Psoas muscle (tissue), 8 donors: ENCODE measurements at regions of chr2 and their contacts with region 1.

Region 1: DNA sequence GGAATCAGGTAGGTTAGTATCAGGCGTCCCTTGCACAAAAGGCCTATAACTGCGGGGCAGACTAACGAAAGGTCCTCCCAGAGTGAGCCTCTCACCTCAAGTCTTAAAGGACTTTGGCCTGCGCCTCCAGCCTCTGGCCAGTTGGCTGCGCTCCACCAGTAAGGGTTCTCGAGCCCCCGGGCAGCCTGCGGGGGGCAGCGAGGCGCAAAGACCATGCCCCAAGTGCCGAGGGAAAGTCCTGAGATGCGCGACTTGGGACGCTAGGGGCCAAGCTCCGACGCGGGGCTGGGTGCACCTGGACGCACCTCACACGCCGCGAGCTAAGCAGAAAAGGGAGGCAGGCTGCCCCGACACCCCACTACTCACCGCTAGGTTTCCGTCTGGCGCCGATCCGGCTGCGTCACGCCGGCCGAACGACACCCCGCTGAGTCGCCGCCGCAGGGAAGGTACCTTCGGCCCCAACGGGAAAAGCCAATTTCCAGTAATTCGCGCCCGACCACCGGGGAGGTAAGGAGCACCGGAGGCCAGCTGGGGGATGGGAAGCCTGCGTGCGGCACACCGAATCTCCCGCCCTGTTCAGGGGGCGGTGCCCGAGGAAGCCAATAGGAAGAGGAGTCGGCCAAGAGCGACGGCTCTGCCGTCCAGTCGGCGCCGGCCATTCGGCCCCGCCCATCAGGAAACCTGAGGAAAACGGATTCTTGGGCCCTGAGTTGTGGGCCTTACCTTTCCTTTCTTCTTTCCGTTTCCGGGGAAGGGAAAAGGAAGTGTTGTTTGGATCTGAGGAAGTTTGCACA is at the start of gene ORC2:
- DNase-seq: peak; percentile 95 to 97
- ATAC-seq: peak; percentile 99 to 100 (median 99)
- H3K4me3 ChIP-seq: peak within 1 kb of the TSS; percentile 94
- H3K27ac ChIP-seq: peak within 1 kb of the TSS; percentile 86
- H3K4me1 ChIP-seq: peaks cover 21% of the 10 kb centered on the region
- H3K27me3 ChIP-seq: no peaks in the 10 kb centered on the region
- CTCF ChIP-seq: peak; percentile 57
- total RNA-seq, gene ORC2: 7.1 to 17.7 (median 12.4) TPM

Region 2: DNA sequence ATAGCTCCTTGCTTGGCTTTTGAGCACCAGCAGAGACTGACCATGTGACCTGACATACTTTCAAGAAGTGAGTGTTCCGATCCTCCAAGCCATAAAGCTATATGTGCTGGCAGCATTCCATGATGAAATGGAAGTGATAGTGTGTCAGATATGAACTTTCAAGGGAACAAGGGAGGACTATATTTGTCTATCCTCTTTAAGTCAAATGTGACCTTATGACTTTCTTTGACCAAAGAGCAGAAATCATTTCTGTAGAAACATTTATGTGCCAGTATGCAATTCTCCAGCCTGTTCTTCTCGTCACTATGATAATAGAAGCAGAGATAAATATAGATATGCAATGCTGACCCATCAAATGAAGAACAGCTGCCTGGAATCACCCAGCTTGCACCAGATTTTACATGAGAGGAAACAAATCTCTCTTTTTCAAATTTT is 93.8 kb after region 1 on chr2:
- intact Hi-C with region 1: no loop called
- DNase-seq: no peak
- ATAC-seq: peak; percentile 57 to 85 (median 72)
- H3K4me3 ChIP-seq: peak overlapping the region; percentile 4
- H3K27ac ChIP-seq: peak overlapping the region; percentile 60
- H3K4me1 ChIP-seq: peaks cover 20% of the 10 kb centered on the region
- H3K27me3 ChIP-seq: no peaks in the 10 kb centered on the region
- CTCF ChIP-seq: no peak

Region 3: DNA sequence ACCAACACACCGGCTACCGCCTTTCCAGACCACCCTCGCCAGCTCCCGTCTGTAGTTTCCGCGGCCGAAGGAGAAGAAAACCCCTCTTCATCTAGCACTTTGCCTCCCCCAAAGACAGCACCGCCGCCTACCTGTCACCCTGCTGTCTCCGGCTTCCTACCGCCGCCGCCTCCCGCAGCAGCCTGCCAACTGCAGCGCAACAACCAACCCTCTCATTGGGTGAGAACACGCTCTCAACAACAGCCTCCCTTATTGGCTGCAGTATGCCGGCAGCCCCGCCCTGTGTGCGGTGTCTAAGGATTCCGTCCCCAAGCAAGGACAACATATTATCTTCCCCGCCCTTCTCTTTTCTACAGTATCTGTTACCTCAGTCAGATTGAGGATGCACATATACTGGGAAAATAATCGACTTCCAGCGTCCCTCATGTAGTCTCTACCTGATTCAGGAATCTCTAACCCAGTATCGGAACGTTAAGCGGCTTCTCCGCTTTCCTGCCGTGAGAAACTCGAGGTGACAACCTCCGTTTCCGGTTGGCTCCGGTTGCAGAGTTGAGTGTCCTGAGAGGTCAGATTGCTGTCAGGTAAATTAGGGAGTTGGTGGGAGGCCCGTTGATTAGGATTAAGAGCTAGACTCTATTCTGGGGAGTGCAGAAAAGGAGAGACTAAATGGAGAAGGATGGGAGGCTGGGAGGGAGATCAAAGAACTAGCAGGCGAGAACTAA is 108.3 kb after region 1 on chr2 and contains the starts of genes HYCC2 and NDUFB3:
- intact Hi-C with region 1: loop called (anchors 1 to 2 kb)
- DNase-seq: peak; percentile 87 to 95
- ATAC-seq: peak; percentile 98 to 100 (median 99)
- H3K4me3 ChIP-seq: peak within 1 kb of the TSS; percentile 92
- H3K27ac ChIP-seq: peak within 1 kb of the TSS; percentile 95
- H3K4me1 ChIP-seq: peaks cover 55% of the 10 kb centered on the region
- H3K27me3 ChIP-seq: no peaks in the 10 kb centered on the region
- CTCF ChIP-seq: peak; percentile 36
- total RNA-seq, gene HYCC2: 7.6 to 8.6 (median 8.1) TPM
- total RNA-seq, gene NDUFB3: 188 to 271 (median 261) TPM

Region 4: DNA sequence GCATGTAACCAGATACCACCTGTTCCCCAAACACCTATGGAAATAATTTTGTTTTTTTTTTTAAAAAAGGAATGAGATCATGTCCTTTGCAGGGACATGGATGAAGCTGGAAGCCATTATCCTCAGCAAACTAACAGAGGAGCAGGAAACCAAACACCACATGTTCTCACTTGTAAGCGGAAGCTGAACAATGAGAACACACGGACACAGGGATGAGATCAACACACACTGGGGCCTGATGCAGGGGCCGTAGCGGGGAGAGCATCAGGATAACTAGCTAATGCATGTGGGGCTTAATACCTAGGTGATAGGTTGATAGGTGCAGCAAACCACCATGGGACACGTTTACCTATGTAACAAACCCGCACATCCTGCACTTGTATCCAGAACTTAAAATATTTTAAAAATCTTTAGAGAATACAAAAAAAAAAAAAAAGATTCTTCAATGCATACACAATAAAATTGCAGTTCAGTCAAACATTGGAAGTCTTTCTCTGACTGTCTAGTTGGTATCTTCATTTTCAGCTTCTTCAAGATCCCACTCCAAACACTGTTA is 208.0 kb after region 1 on chr2:
- intact Hi-C with region 1: loop called (anchors 5 to 10 kb)
- DNase-seq: no peak
- ATAC-seq: peak; percentile 11 to 30 (median 20)
- H3K4me3 ChIP-seq: no peak overlapping the region
- H3K27ac ChIP-seq: no peak overlapping the region
- H3K4me1 ChIP-seq: no peaks in the 10 kb centered on the region
- H3K27me3 ChIP-seq: no peaks in the 10 kb centered on the region
- CTCF ChIP-seq: no peak